ENCODE measurements at regions of chr12 and their contacts with region 1.

Region 1: DNA sequence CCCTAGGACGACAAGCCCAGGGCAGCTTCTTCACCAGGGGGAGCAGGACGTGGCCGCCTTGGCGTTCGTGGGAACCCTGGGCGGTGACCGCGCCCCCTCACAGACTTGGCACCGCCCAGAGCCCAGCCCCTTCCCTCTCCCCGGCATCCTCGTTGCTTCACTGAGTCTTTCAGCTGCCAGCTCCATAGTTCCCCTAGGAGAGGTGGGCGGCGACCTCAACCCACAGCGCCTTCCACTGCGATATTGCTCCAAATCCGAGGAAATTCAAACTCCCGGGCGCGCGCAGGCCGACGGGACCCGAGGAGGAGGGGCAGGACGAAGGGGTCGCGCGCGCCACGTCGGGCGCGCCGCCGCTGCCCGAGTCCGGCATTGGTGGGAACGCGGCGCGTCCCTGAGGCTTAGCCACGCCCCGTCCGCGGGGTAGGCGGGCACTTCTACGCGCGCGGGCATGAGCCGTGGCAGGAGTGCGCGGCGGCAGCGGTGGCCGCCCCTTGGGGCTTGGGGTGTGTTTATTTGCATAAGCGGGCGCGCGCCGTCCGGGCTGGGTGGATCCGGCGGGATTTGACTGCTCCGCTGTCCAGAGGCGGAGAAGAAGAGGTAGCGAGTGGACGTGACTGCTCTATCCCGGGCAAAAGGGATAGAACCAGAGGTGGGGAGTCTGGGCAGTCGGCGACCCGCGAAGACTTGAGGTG is at the starts of genes APAF1 and IKBIP:
- DNase-seq: peak; percentile 99
- H3K4me3 ChIP-seq: peak within 1 kb of the TSS; percentile 83 to 99 (median 90)
- H3K27ac ChIP-seq: peak within 1 kb of the TSS; percentile 89 to 98 (median 96)
- H3K4me1 ChIP-seq: peaks cover 0 to 29% (median 9%) of the 10 kb centered on the region in 4 donors
- H3K27me3 ChIP-seq: no peaks in the 10 kb centered on the region
- CTCF ChIP-seq: no peak
- EP300 ChIP-seq: no peak
- POLR2A ChIP-seq: peak; percentile 92
- total RNA-seq, gene APAF1: 10.5 to 25.4 (median 23.4) TPM
- total RNA-seq, gene IKBIP: 0.40 to 6.8 (median 3.0) TPM in 3 of 4 donors, not detected in the other

Region 2: DNA sequence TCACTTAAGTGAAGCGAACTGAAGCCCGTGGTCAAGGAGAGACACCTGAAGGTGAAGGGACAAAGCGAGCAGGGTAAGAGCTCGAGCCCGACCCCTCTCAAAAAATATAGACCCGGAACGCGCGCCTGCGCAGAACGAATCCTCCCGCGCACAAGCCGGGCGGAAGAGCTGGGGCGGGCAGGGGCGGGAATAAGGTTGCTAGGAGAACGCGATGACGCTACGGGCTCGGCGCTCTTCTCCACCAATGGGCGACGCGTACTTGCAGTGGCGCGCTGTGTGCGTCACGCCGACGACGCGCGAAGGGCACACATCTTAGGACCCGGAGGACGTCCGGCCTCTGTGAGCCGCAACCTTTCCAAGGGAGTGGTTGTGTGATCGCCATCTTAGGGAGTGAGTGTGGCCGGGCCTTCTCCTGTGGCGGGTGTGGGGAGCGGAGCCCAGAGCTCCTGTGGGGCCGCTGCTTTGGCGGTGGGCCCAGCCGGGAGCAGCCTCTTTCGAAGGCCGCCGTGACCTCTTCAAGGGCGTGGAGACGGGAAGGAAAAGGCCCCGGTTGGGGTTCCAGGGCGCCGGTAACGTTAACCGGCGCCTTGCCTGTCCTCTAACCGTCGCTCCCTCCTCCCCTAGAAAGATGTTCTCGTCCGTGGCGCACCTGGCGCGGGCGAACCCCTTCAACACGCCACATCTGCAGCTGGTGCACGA is 51.4 kb before region 1 on chr12 and contains the start of gene SLC25A3:
- in situ Hi-C with region 1: loop called in 1 of 4 experiments (anchors 10 kb)
- intact Hi-C with region 1: loop called (anchors 10 kb)
- DNase-seq: peak; percentile 97
- H3K4me3 ChIP-seq: peak within 1 kb of the TSS; percentile 36 to 81 (median 74)
- H3K27ac ChIP-seq: peak within 1 kb of the TSS; percentile 94 to 99 (median 96)
- H3K4me1 ChIP-seq: peaks cover 7 to 25% (median 15%) of the 10 kb centered on the region in 4 donors
- H3K27me3 ChIP-seq: no peaks in the 10 kb centered on the region
- CTCF ChIP-seq: no peak
- EP300 ChIP-seq: no peak
- POLR2A ChIP-seq: peak; percentile 99
- total RNA-seq, gene SLC25A3: 224 to 690 (median 542) TPM